RWPE1 (cell line): ENCODE measurements at regions of chr5 and their contacts with region 1.

Region 1: DNA sequence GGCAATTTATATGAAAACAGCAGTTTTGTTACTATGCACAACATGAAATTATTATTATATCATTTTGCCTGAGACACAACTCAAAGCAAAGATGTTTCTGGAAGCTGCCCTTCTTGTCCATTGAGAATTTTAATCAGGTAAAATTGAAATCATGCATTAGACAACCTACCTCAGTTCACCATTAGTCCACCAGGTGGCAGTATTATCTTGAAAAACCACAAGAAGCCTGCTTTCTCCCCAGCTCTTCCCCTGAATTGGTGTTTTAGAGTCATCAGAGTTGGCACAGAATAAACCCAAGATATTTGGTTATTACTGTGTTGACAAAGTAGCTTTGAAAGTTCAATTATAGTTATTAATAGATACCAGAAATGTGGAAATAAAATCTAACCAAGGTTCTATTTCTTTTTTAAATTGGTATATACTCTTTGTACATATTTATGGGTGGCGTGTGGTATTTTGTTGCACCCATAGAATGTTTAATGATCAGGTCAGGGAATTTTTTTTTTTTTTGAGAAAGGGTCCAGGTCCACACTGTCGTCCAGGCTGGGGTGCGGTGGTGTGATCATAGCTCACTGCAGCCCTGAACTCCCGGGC is 25.7 kb downstream of the UTP15 start:
- DNase-seq: peak; percentile 84
- H3K27ac ChIP-seq: no peak overlapping the region
- CTCF ChIP-seq: peak; percentile 85

Region 2: GRCh38 chr5:73693481-73694061 is 102.4 kb after region 1 on chr5:
- CTCF ChIA-PET with region 1: interaction called, 10 read pairs
- POLR2A ChIA-PET with region 1: no interaction called
- DNase-seq: no peak
- H3K27ac ChIP-seq: no peak overlapping the region
- CTCF ChIP-seq: peak; percentile 35; the same call in 1 of the 2 replicates

Region 3: GRCh38 chr5:75130818-75131349 is 1539.7 kb after region 1 on chr5:
- CTCF ChIA-PET with region 1: no interaction called
- POLR2A ChIA-PET with region 1: no interaction called
- DNase-seq: no peak
- H3K27ac ChIP-seq: no peak overlapping the region
- CTCF ChIP-seq: no peak